Right ventricle myocardium inferior (tissue), 1 donor: ENCODE measurements at regions of chr11 and their contacts with region 1.

Region 1: GRCh38 chr11:65506770-65507505 is 8.1 kb downstream of the MALAT1 start:
- DNase-seq: no peak
- ATAC-seq: peak; percentile 8

Region 2: GRCh38 chr11:65366340-65366773 is 140.6 kb before region 1 on chr11:
- intact Hi-C with region 1: loop called (anchors 1 kb)
- DNase-seq: no peak
- ATAC-seq: peak; percentile 81

Region 3: DNA sequence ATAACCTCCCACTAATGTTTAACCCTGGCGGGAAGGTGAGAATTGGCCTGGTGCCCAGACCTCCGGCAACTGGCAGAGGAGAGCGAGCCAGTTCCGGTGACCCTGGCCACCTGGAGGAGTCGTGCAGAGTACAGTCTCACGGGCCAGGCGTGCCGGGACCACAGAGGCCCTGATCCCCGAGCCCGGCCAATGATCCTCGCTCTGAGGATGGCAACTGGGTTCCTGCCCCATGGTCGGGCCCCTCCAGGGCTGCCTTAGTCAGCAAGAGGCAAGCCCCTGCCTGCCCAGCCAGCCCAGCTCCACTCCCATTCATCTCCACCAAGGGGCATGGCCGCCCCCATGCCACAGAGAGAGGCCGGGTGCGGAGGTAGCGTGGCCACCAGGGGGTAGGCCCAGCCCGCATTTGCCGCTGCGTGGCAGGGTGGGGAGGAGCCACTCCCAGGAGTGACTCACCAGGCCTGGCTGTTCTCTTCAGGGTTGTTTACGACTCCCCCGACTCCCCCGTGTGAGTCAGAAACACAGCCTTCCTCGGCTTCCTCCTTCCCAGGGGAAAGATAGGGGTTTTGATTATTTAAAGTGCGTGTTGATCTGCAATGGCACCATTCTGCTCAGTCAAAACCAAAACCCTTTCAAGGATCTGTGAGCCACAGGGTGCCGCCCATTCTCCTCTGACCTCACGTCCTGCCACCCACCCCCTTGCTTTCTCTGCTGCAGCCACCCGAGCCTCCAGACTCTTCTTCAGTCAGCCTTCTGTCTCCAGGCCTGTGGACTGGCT is 124.7 kb before region 1 on chr11 and contains the start of gene SLC25A45:
- intact Hi-C with region 1: loop called (anchors 1 kb)
- DNase-seq: peak; percentile 95
- ATAC-seq: peak; percentile 94
- total RNA-seq, gene SLC25A45: 5.6 TPM

Region 4: GRCh38 chr11:65487413-65488272 is 19.3 kb before region 1 on chr11:
- intact Hi-C with region 1: no loop called
- DNase-seq: peak; percentile 99
- ATAC-seq: peak; percentile 86